Aorta (tissue), 5 donors: ENCODE measurements at regions of chr11 and their contacts with region 1.

Region 1: DNA sequence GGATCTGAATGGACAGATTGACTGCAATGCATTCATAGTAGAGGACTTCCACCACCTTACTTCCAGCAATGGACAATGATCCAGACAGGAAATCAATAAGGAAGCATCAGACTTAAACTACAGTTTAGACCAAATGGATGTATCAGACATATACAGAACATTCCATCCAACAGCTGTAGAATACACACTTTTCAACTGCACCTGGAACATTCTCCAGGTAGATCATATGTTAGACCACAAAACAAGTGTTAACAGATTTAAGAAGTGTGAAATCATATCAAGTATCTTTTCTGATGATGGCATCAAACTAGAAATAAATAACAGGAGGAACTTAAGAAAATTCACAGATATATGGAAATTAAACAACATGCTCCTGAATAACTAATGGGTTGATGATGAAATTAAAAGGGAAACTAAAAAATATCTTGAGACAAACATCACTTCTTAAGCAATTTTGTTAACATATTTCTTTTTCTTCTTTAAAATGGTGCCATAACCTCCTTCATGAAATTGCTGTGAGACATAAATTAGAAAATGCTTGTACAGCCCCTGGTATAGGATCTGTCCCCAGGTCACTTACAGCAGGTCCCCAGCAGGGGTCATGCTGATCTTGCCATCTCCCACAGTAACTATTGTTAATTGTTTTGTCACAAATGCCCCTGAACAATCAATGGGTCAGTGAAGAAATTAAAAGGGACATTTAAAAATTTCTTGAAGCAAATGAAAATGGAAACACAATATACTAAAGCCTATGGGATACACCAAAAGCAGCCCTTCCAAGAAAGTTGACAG is 100.0 kb upstream of the OR4B1 start:
- DNase-seq: no peak
- ATAC-seq: no peak
- H3K4me3 ChIP-seq: no peak overlapping the region
- H3K27ac ChIP-seq: no peak overlapping the region
- H3K4me1 ChIP-seq: no peaks in the 10 kb centered on the region
- H3K27me3 ChIP-seq: no peaks in the 10 kb centered on the region

Region 2: GRCh38 chr11:47858169-47858543 is 258.5 kb before region 1 on chr11:
- intact Hi-C with region 1: loop called in 1 of 2 experiments (anchors 10 kb)
- DNase-seq: no peak
- ATAC-seq: peak; percentile 83
- H3K4me3 ChIP-seq: no peak overlapping the region
- H3K27ac ChIP-seq: no peak overlapping the region
- H3K4me1 ChIP-seq: no peaks in the 10 kb centered on the region
- H3K27me3 ChIP-seq: no peaks in the 10 kb centered on the region

Region 3: GRCh38 chr11:48028914-48029680 is 87.5 kb before region 1 on chr11:
- intact Hi-C with region 1: no loop called
- DNase-seq: no peak
- ATAC-seq: no peak
- H3K4me3 ChIP-seq: no peak overlapping the region
- H3K27ac ChIP-seq: no peak overlapping the region
- H3K4me1 ChIP-seq: no peaks in the 10 kb centered on the region
- H3K27me3 ChIP-seq: no peaks in the 10 kb centered on the region